ENCODE measurements at regions of chr4 and their contacts with region 1.

Region 1: GRCh38 chr4:55754754-55755350 is 64.7 kb upstream of the EXOC1L start:
- DNase-seq: no peak
- H3K4me3 ChIP-seq: no peak overlapping the region
- H3K27ac ChIP-seq: no peak overlapping the region
- H3K4me1 ChIP-seq: no peaks in the 10 kb centered on the region
- H3K27me3 ChIP-seq: no peaks in the 10 kb centered on the region
- CTCF ChIP-seq: no peak
- POLR2A ChIP-seq: no peak

Region 2: GRCh38 chr4:53771326-53771725 is 1983.5 kb before region 1 on chr4:
- intact Hi-C with region 1: loop called (anchors 5 kb)
- DNase-seq: no peak
- H3K4me3 ChIP-seq: no peak overlapping the region
- H3K27ac ChIP-seq: no peak overlapping the region
- H3K4me1 ChIP-seq: no peaks in the 10 kb centered on the region
- H3K27me3 ChIP-seq: no peaks in the 10 kb centered on the region
- CTCF ChIP-seq: no peak
- POLR2A ChIP-seq: no peak

Region 3: DNA sequence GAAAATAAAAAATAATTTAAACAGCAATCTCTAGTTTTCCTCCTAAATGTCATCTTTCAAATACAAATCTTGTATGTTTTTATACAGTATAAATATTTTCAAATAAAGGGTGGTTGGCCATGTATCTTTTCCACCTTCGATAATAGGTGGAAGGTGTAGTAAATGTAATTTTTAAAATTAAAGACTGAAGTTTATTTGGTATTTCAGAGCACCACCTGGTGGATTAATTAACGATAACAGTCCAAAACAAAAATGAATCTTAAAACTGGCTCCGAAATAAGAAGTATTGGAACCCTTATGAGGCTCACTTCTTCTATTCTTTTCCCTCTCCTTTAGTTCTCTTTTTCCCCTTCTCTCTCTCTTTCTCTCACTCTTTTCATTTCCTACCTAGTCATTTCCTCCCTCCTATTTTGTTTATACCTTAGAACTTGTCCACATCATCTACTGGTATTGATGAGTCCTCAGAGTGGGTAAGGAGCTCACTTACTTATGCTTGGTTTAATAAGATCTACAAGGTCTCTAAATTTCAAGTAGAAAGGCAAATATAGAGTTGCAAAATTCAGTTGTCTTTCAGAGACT is 18.2 kb before region 1 on chr4:
- intact Hi-C with region 1: no loop called
- DNase-seq: no peak
- H3K4me3 ChIP-seq: no peak overlapping the region
- H3K27ac ChIP-seq: no peak overlapping the region
- H3K4me1 ChIP-seq: no peaks in the 10 kb centered on the region
- H3K27me3 ChIP-seq: no peaks in the 10 kb centered on the region
- CTCF ChIP-seq: peak in 1 of 3 experiments; percentile 23
- POLR2A ChIP-seq: no peak